ENCODE measurements at regions of chr19 and their contacts with region 1.

Region 1: DNA sequence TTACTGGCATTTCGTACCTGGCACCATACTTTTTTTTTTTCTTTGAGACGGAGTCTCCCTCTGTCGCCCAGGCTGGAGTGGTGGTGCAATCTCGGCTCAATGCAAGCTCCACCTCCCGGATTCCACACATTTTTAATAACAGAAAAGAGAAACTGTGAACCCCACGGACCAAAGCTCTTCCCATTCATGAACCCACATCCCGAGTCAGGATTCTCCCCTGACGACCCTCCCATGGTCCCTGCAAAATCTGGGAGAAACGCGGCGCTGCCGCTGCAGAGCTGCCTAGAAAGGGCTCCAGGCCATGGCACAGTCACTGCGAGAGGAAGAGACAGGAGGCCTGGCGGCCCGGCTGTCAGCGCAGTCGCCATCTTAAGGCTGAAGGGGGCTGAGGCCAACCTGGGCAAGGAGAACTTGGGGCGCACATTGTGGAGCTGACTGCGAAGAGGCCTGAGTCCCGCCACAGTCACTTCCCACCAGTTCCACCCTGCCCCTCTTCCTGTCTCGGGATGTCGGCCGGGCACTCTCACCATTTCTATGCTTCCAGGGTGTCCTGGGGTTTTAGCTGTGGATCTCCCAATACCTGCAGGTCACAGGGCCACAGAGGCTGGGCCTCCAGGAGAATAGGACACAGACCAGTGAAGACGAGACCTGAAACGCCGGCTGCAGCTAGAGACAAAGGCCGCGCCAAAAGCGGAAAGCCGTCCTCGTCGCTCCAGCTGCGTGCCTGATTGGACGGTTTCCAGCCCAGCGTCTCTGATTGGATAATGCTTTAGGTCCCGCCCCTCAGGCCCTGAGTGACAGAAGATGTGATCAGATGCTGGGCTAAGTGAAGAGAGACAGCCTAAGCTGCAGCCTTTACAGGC is 71.0 kb downstream of the ZNF486 start:
- DNase-seq: peak; percentile 97
- H3K4me3 Mint-ChIP-seq: peak overlapping the region; percentile 100
- H3K27ac Mint-ChIP-seq: peak overlapping the region; percentile 93
- H3K4me1 Mint-ChIP-seq: peaks cover 12% of the 10 kb centered on the region
- H3K27me3 Mint-ChIP-seq: no peaks in the 10 kb centered on the region

Region 2: GRCh38 chr19:19997656-19998268 is 240.2 kb before region 1 on chr19:
- CTCF ChIA-PET with region 1: interaction called, 7 read pairs
- intact Hi-C with region 1: loop called (anchors 1 kb)
- DNase-seq: peak; percentile 62
- H3K4me3 Mint-ChIP-seq: no peak overlapping the region
- H3K27ac Mint-ChIP-seq: no peak overlapping the region
- H3K4me1 Mint-ChIP-seq: no peaks in the 10 kb centered on the region
- H3K27me3 Mint-ChIP-seq: no peaks in the 10 kb centered on the region

Region 3: DNA sequence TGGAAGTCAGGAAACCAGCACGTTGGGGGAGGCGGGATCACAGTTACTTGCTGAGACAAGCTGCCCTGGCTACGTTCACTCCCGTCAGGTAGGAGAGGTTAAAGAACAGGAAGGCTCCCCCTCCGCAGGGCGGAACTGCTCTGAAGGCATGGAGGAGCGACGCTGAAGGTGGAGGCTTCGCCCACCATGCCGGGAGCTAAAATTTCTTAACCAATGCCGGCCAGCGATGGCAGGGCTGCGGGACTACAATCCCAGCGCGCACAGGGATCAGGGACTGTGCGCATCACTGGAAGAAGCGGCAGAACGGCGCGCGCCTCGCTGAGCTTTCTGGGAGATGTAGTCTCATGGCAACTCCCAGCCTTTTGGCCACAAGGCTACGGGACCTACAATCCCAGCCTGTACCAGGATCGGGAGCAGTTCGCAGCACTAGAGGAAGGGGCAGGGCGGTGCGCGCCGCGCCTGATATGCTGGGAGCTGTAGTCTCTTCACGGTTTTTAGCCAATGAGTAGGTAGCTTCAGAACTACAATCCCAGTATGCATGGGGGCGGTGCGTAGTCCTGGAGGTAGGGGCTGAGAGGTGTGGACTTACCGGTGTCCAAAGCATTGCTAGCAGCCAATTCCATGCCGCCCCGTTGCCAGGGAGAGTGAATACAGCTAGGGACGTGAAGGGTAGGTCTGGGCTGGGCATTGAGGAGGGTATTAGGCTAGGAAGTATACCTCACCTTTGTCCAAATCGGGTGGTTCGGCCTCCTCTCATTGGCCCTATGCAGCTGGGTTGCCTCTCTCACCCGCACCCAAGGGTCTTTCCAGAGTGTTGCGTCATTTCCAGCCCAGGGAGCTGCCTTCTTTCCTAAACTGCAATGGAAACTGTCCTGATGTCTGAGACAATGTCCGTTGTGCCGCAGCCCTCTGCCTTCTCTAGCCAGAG is 185.9 kb before region 1 on chr19:
- CTCF ChIA-PET with region 1: no interaction called
- intact Hi-C with region 1: loop called (anchors 2 kb)
- DNase-seq: peak; percentile 87
- H3K4me3 Mint-ChIP-seq: peak overlapping the region; percentile 95
- H3K27ac Mint-ChIP-seq: peak overlapping the region; percentile 86
- H3K4me1 Mint-ChIP-seq: peaks cover 6% of the 10 kb centered on the region
- H3K27me3 Mint-ChIP-seq: no peaks in the 10 kb centered on the region

Region 4: GRCh38 chr19:20167020-20167644 is 70.9 kb before region 1 on chr19 and contains the start of gene ZNF486:
- CTCF ChIA-PET with region 1: no interaction called
- intact Hi-C with region 1: loop called (anchors 1 kb)
- DNase-seq: peak; percentile 98
- H3K4me3 Mint-ChIP-seq: peak within 1 kb of the TSS; percentile 98
- H3K27ac Mint-ChIP-seq: peak within 1 kb of the TSS; percentile 91
- H3K4me1 Mint-ChIP-seq: peaks cover 19% of the 10 kb centered on the region
- H3K27me3 Mint-ChIP-seq: no peaks in the 10 kb centered on the region
- total RNA-seq, gene ZNF486: 11.3 to 13.2 TPM

Region 5: DNA sequence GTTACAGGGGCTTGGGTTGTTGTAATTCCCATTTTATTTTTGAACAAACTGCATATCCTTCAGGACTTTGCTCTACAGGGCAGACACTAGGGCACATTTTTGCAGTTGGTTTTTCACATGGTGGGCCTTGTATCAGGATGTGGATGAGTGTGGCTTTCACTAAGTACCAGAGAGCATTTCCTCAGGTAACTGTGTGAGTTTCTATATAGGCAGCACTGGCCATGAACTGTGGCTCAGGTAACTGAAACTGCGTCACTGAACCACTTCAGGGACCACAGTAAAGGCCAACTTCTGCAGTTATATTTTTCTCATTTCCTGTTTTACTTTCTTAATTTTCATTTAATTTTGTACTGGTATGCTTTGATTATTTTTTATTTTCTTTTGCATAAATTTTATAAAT is 95.5 kb after region 1 on chr19:
- CTCF ChIA-PET with region 1: no interaction called
- intact Hi-C with region 1: no loop called
- DNase-seq: no peak
- H3K4me3 Mint-ChIP-seq: no peak overlapping the region
- H3K27ac Mint-ChIP-seq: no peak overlapping the region
- H3K4me1 Mint-ChIP-seq: no peaks in the 10 kb centered on the region
- H3K27me3 Mint-ChIP-seq: no peaks in the 10 kb centered on the region

Measured in activated naive CD4-positive, alpha-beta T cell treated with anti-CD3 and anti-CD28 coated beads for 36 hours (primary cell).